MCF 10A (cell line): ENCODE measurements at regions of chr22 and their contacts with region 1.

Region 1: DNA sequence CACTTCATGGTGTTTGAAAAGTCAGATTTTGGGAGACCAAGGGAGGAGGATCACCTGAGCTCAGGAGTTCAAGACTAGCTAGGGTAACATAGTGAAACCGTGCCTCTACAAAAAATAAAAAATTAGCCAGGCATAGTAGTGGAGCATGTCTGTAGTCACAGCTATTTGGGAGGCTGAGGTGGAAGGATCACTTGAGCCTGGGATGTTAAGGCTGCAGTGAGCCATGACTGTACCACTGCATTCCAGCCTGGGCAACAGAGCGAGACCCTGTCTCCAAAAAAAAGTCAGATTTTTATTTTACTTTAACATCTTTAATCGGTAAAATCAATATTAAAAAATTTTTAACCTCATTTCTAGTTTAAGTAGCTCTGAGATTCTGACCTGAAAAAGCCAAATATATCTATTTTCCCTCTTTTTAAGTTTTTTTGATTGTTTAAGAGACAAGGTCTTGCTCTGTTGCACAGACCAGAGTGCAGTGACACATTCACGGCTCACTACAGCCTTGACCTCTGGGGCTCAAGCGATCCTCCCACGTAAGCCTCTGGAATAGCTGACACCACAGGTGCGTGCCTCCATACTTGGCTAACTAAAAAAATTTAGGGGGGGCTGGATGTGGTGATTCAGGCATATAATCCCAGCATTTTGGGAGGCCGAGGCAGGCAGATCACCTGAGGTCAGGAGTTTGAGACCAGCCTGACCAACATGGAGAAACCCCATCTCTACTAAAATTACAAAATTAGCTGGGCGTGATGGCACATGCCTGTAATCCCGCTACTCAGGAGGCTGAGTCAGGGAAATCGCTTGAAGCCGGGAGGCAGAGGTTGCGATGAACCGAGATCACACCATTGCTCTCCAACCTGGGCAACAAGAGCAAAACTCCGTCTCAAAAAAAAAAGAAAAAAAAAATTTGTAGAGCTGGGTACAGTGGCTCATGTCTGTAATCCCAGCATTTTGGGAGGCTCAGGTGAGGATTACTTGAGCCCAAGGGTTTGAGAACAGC is 48.4 kb downstream of the SFI1 start:
- DNase-seq: peak; percentile 47
- H3K4me3 Mint-ChIP-seq: no peak overlapping the region
- H3K27ac Mint-ChIP-seq: no peak overlapping the region
- H3K4me1 Mint-ChIP-seq: no peaks in the 10 kb centered on the region
- H3K27me3 Mint-ChIP-seq: no peaks in the 10 kb centered on the region
- CTCF ChIP-seq: no peak

Region 2: DNA sequence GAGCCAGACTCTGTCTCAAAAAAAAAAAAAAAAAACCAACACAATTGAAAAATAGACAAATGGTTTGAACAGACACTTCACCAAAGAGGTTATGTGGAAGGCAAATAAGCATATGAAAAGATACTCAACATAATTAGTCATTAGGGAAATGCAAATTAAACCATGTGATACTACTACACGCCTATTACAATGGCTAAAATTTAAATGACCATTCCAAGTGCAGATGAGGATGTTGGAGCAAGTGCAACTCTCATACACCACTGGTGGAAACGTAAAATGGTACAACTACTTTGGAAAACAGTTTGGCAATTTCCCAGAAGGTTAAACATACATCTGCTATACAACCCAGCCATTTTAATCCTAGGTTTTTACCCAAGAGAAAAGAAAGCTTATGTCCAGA is 79.5 kb before region 1 on chr22:
- CTCF ChIA-PET with region 1: no interaction called
- POLR2A ChIA-PET with region 1: no interaction called
- intact Hi-C with region 1: no loop called
- DNase-seq: no peak
- H3K4me3 Mint-ChIP-seq: no peak overlapping the region
- H3K27ac Mint-ChIP-seq: no peak overlapping the region
- H3K4me1 Mint-ChIP-seq: no peaks in the 10 kb centered on the region
- H3K27me3 Mint-ChIP-seq: no peaks in the 10 kb centered on the region
- CTCF ChIP-seq: no peak

Region 3: DNA sequence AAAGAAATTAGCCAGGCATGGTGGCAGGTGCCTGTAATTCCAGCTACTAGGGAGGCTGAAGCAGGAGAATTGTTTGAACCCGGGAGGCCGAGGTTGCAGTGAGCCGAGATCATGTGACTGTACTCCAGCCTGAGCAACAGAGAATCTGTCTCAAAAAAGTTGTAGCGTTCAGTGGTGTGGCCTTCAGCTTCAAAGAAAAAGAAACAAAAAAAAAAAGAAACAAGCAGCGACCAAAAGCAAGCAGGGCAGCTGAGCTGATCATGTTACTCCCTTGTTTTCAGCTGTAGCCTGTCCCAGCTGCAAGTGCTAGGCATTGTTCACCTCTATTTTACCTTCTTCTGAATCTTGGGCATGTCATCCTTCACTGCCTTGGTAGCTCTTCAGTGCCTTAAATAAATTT is 11.4 kb before region 1 on chr22:
- CTCF ChIA-PET with region 1: no interaction called
- POLR2A ChIA-PET with region 1: interaction called, 12 read pairs
- intact Hi-C with region 1: no loop called
- DNase-seq: no peak
- H3K4me3 Mint-ChIP-seq: no peak overlapping the region
- H3K27ac Mint-ChIP-seq: no peak overlapping the region
- H3K4me1 Mint-ChIP-seq: peaks cover 24% of the 10 kb centered on the region
- H3K27me3 Mint-ChIP-seq: no peaks in the 10 kb centered on the region
- CTCF ChIP-seq: no peak